AG04450 (cell line): ENCODE measurements at regions of chr16 and their contacts with region 1.

Region 1: GRCh38 chr16:785563-786535 is 2.3 kb downstream of the RPUSD1 start:
- DNase-seq: no peak
- H3K4me3 ChIP-seq: no peak overlapping the region; the same call in 1 of the 2 replicates
- H3K27ac ChIP-seq: no peak overlapping the region
- H3K27me3 ChIP-seq: no peaks in the 10 kb centered on the region
- CTCF ChIP-seq: peak; percentile 51

Region 2: GRCh38 chr16:711548-712320 is 74.1 kb before region 1 on chr16:
- CTCF ChIA-PET with region 1: interaction called, 29 read pairs
- POLR2A ChIA-PET with region 1: interaction called, 5 read pairs
- DNase-seq: no peak
- H3K4me3 ChIP-seq: no peak overlapping the region
- H3K27ac ChIP-seq: no peak overlapping the region
- H3K27me3 ChIP-seq: peaks cover 15% of the 10 kb centered on the region
- CTCF ChIP-seq: peak; percentile 88